Natural killer cell (primary cell): ENCODE measurements at regions of chr12 and their contacts with region 1.

Region 1: DNA sequence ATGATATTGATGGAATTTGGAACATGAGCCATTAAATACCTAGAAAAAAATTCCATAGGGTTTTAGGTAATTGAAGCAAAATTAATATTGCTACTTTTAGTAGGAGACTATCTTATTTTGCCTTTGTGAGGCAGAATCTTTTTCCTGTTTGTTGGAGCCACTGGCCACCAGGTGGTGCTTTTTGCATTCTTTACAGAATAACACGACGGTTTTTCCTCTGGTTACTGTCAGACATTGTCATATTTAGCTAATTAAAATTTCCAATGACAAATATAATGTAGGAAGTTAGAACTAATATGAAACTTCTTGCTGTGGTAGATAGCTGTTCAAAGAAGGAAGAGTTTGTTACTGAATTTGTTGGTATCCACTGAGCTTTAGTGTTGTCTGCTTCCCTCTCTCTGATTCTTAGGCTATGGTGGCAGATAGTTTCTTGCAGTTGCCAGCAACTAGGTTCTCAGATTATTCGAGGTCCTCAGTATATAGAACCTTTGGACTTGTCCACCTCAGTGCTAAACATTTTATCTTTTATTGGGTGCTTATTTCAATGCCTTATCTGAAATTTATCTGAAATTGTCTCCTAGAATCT is 25.7 kb downstream of the RAB21 start:
- DNase-seq: peak in 1 of 2 donors; percentile 71
- ATAC-seq: peak in 2 of 3 donors; percentile 69 to 85
- H3K4me3 ChIP-seq: no peak overlapping the region
- H3K4me3 Mint-ChIP-seq: no peak overlapping the region
- H3K27ac ChIP-seq: no peak overlapping the region
- H3K27ac Mint-ChIP-seq: peak overlapping the region; percentile 61 to 81
- H3K4me1 ChIP-seq: no peaks in the 10 kb centered on the region
- H3K4me1 Mint-ChIP-seq: peaks cover 12 to 16% of the 10 kb centered on the region in 2 donors
- H3K27me3 ChIP-seq: no peaks in the 10 kb centered on the region
- H3K27me3 Mint-ChIP-seq: no peaks in the 10 kb centered on the region
- CTCF ChIP-seq: peak; percentile 75

Region 2: GRCh38 chr12:71746983-71747611 is 33.2 kb before region 1 on chr12:
- intact Hi-C with region 1: no loop called
- DNase-seq: peak in 1 of 2 donors; percentile 80
- ATAC-seq: peak; percentile 74 to 94 (median 92)
- H3K4me3 ChIP-seq: no peak overlapping the region
- H3K4me3 Mint-ChIP-seq: no peak overlapping the region
- H3K27ac ChIP-seq: no peak overlapping the region
- H3K27ac Mint-ChIP-seq: no peak overlapping the region
- H3K4me1 ChIP-seq: no peaks in the 10 kb centered on the region
- H3K4me1 Mint-ChIP-seq: no peaks in the 10 kb centered on the region
- H3K27me3 ChIP-seq: peaks cover 5% of the 10 kb centered on the region
- H3K27me3 Mint-ChIP-seq: peaks cover 16 to 25% of the 10 kb centered on the region in 2 donors
- CTCF ChIP-seq: peak; percentile 75

Region 3: GRCh38 chr12:71846322-71846940 is 66.1 kb after region 1 on chr12:
- intact Hi-C with region 1: loop called (anchors 1 kb)
- DNase-seq: peak in 1 of 2 donors; percentile 66
- ATAC-seq: peak; percentile 50 to 54 (median 53)
- H3K4me3 ChIP-seq: no peak overlapping the region
- H3K4me3 Mint-ChIP-seq: no peak overlapping the region
- H3K27ac ChIP-seq: no peak overlapping the region
- H3K27ac Mint-ChIP-seq: no peak overlapping the region
- H3K4me1 ChIP-seq: no peaks in the 10 kb centered on the region
- H3K4me1 Mint-ChIP-seq: peaks cover 9 to 19% of the 10 kb centered on the region in 2 donors
- H3K27me3 ChIP-seq: no peaks in the 10 kb centered on the region
- H3K27me3 Mint-ChIP-seq: no peaks in the 10 kb centered on the region
- CTCF ChIP-seq: peak; percentile 52

Region 4: GRCh38 chr12:71938728-71939385 is 158.5 kb after region 1 on chr12 and contains the start of gene TPH2:
- intact Hi-C with region 1: loop called (anchors 1 kb)
- DNase-seq: peak; percentile 24 to 59
- ATAC-seq: peak; percentile 75 to 83 (median 79)
- H3K4me3 ChIP-seq: no peak within 1 kb of the TSS
- H3K4me3 Mint-ChIP-seq: no peak within 1 kb of the TSS
- H3K27ac ChIP-seq: no peak within 1 kb of the TSS
- H3K27ac Mint-ChIP-seq: no peak within 1 kb of the TSS
- H3K4me1 ChIP-seq: no peaks in the 10 kb centered on the region
- H3K4me1 Mint-ChIP-seq: peaks cover 0 to 6% of the 10 kb centered on the region in 2 donors
- H3K27me3 ChIP-seq: peaks cover 11% of the 10 kb centered on the region
- H3K27me3 Mint-ChIP-seq: peaks cover 41 to 70% of the 10 kb centered on the region in 2 donors
- CTCF ChIP-seq: no peak
- total RNA-seq, gene TPH2: not detected